ENCODE measurements at regions of chr2 and their contacts with region 1.

Region 1: DNA sequence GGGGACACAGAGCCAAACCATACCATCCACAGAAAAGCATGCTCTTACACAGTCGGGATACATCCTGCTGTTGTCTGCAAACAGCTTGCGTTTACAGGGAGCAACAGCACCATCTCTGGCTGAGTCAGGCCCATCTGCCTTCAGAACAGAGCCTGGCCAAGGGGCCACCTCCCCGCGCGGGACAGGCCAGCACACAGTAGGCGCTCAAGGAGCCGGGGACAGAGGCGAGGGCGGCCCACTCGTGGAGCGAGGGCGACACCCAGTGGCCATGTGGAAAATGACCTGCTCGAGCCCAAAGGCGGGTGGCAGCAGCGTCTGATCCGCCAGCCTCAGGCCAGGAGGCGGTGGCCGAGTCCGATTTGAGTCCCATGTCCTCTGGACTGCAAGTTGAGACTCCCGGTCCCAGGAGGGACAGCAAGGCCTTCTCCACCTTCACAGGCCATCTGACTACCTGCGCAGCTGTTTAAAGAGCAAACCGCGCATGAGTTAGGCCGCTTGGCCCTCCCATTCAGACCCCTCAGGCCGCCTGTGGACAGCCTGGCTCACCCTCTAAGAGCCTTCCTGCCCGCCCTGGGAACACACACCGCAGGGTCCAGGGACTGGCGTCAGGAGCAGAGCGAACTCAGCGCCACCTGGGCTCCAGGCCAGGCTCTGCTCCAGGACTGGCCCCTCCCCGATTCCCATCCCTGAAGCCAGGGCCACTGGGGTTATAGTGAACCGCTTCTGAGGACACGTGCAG is 38.3 kb downstream of the TTC32 start:
- DNase-seq: peak; percentile 63
- H3K4me3 Mint-ChIP-seq: no peak overlapping the region
- H3K27ac Mint-ChIP-seq: peak overlapping the region; percentile 22
- H3K4me1 Mint-ChIP-seq: peaks cover 17% of the 10 kb centered on the region
- H3K27me3 Mint-ChIP-seq: no peaks in the 10 kb centered on the region
- CTCF ChIP-seq: peak; percentile 99

Region 2: DNA sequence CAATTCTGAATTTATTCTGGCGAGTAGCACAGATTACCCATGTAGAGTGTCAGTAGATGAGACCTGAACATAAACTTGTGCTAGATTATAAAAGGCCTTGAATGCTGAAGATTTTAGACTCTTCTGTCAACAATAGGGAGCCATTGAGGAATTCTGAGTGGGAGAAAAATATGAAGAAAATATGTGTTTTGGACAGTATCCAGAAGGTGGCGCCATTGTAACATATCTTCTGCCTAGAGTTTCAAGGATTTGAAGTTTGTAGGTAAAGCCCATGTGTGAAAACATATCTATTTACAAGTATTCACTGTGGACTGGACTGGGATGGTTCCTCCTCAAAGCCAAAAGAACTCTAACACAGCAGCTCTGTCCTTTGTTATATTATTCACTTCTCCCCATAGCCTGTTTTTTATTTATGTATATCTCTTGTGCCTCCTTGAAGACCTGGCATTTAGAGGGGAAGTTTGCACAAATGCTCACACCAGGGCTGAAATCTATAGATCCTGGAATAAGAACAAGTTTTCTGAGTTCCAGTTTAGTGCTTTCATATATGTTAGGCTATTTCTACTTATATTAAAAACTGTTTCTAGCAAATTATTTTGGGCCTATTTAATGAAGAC is 1427.9 kb before region 1 on chr2:
- CTCF ChIA-PET with region 1: interaction called, 4 read pairs
- POLR2A ChIA-PET with region 1: no interaction called
- intact Hi-C with region 1: loop called (anchors 1 kb)
- DNase-seq: peak; percentile 69
- H3K4me3 Mint-ChIP-seq: no peak overlapping the region
- H3K27ac Mint-ChIP-seq: no peak overlapping the region
- H3K4me1 Mint-ChIP-seq: no peaks in the 10 kb centered on the region
- H3K27me3 Mint-ChIP-seq: no peaks in the 10 kb centered on the region
- CTCF ChIP-seq: peak; percentile 63

Region 3: DNA sequence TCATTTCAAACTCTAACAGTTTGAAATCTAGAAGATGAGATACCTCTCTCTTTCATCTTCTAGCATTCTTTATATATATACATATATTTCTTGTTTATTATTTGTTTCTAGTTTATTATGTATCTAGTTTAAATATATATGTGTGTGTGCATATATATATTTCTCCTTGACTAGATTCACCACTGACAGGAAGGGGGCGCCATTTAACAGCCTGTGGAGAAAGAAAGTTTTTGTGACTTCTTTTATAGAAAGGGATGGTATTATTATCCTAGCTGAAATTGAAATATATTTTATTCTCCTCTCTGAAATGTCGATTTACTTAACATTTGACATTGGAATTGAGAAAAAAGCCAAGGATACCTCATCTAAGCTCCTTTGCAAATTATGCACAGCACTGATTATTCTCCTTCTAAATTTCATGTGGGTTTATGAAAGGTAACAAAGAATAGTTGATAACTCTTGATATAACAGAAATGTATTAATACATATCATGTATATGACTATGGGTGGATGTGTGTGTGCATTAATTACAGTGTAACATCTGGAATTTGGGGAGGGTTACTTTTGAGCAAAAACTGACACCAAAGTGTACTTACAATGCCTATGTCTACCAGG is 1113.5 kb before region 1 on chr2:
- CTCF ChIA-PET with region 1: interaction called, 8 read pairs
- POLR2A ChIA-PET with region 1: no interaction called
- intact Hi-C with region 1: loop called (anchors 1 kb)
- DNase-seq: peak; percentile 76
- H3K4me3 Mint-ChIP-seq: no peak overlapping the region
- H3K27ac Mint-ChIP-seq: no peak overlapping the region
- H3K4me1 Mint-ChIP-seq: peaks cover 9% of the 10 kb centered on the region
- H3K27me3 Mint-ChIP-seq: no peaks in the 10 kb centered on the region
- CTCF ChIP-seq: peak; percentile 63

Region 4: DNA sequence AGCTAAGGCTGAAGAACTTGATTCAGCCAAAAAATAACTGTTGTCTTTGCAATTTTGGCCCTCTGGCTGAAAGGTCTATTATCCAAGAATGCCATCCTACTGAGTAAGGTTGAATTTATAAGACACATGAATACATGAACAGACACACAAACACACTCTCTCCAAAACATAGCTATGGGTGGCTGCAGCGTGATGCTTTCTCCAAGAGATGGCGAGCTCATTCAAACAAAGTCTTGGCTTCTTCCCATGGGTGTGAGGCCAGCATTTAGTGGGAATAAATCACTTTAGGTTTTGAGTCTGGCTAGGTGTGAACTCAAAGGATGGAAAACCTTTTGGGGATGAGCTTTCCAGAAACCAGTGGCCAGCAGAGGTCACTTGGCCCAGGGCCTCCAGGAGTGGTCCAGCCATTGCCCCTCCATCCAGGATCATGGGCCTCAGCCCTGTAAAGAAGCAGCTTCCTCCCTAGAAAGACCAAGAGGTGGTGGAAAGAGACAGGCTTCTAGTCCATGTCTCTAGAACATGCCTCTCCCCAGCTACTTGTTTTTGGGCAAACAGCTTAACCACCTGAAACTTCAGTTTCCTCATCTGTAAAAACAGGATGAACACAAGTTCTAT is 494.0 kb before region 1 on chr2:
- CTCF ChIA-PET with region 1: interaction called, 69 read pairs
- POLR2A ChIA-PET with region 1: interaction called, 6 read pairs
- intact Hi-C with region 1: loop called (anchors 1 kb)
- DNase-seq: peak; percentile 70
- H3K4me3 Mint-ChIP-seq: no peak overlapping the region
- H3K27ac Mint-ChIP-seq: no peak overlapping the region
- H3K4me1 Mint-ChIP-seq: no peaks in the 10 kb centered on the region
- H3K27me3 Mint-ChIP-seq: no peaks in the 10 kb centered on the region
- CTCF ChIP-seq: peak; percentile 71

Region 5: GRCh38 chr2:19465978-19466377 is 397.5 kb before region 1 on chr2:
- CTCF ChIA-PET with region 1: no interaction called
- POLR2A ChIA-PET with region 1: no interaction called
- intact Hi-C with region 1: no loop called
- DNase-seq: no peak
- H3K4me3 Mint-ChIP-seq: no peak overlapping the region
- H3K27ac Mint-ChIP-seq: no peak overlapping the region
- H3K4me1 Mint-ChIP-seq: no peaks in the 10 kb centered on the region
- H3K27me3 Mint-ChIP-seq: no peaks in the 10 kb centered on the region
- CTCF ChIP-seq: no peak

Region 6: DNA sequence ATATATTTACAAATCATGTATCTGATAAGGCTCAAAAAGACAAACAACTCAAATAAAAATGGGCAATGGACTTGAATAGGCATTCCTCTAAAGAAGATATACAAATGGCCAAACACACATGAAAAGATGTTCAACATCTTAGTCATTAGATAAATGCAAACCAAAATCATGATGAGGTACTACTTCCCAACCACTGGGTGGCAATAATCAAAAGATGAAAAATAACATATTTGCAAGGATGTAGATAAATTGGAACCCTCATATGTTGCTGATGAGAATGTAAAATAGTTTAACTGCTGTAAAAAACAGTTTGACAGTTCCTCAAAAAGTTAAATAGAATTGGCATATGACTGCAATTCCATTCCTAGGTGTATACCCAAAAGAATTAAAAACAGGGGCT is 94.0 kb before region 1 on chr2:
- CTCF ChIA-PET with region 1: interaction called, 14 read pairs
- POLR2A ChIA-PET with region 1: no interaction called
- intact Hi-C with region 1: loop called (anchors 1 kb)
- DNase-seq: peak; percentile 42
- H3K4me3 Mint-ChIP-seq: no peak overlapping the region
- H3K27ac Mint-ChIP-seq: no peak overlapping the region
- H3K4me1 Mint-ChIP-seq: peaks cover 2% of the 10 kb centered on the region
- H3K27me3 Mint-ChIP-seq: no peaks in the 10 kb centered on the region
- CTCF ChIP-seq: peak; percentile 19

Region 7: DNA sequence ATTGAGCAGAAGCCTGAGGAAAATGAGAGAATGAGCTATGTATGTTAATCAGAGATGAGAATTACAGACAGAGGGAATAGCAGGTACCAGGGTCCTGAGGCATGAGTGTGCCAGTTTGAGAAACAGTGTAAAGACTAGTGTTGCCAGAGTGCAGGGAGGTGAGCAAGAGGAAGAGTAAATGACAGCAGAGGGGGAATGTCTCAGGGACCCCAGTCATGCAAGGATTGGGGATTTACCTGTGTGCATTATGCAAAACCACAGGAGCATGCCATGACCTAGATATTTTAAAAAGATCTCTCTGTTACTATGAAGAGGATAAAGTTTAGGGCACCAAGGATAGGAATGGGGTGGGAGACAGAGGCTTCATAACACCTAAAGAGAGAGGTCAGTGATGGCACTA is 33.8 kb before region 1 on chr2:
- CTCF ChIA-PET with region 1: no interaction called
- POLR2A ChIA-PET with region 1: no interaction called
- intact Hi-C with region 1: no loop called
- DNase-seq: no peak
- H3K4me3 Mint-ChIP-seq: no peak overlapping the region
- H3K27ac Mint-ChIP-seq: no peak overlapping the region
- H3K4me1 Mint-ChIP-seq: no peaks in the 10 kb centered on the region
- H3K27me3 Mint-ChIP-seq: peaks cover 23% of the 10 kb centered on the region
- CTCF ChIP-seq: no peak

Region 8: DNA sequence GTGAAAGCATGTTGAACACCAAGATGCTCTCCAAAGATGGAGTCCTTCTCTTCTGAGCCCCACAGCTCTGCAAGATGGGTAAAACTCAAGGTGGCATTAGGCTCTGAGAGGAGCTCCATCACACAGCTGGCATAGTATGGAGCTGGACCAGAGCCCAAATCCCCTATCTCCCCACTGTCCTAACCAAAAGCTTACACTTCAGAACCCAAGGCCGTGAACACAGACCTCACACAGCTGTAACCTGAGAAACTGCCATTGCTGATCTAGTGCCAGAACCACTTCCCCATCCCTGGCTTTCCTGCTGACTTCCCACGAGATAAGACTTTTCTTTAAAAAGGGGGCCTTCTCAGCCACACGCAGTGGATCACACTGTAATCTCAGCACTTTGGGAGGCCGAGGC is 13.3 kb after region 1 on chr2:
- CTCF ChIA-PET with region 1: interaction called, 57 read pairs
- POLR2A ChIA-PET with region 1: interaction called, 3 read pairs
- intact Hi-C with region 1: no loop called
- DNase-seq: no peak
- H3K4me3 Mint-ChIP-seq: no peak overlapping the region
- H3K27ac Mint-ChIP-seq: no peak overlapping the region
- H3K4me1 Mint-ChIP-seq: no peaks in the 10 kb centered on the region
- H3K27me3 Mint-ChIP-seq: no peaks in the 10 kb centered on the region
- CTCF ChIP-seq: no peak

Measured in MCF 10A (cell line).